ENCODE measurements at regions of chr2 and their contacts with region 1.

Region 1: GRCh38 chr2:2121887-2122286 is 209.2 kb downstream of the MYT1L start:
- DNase-seq: no peak
- ATAC-seq: no peak
- H3K4me3 ChIP-seq: no peak overlapping the region
- H3K27ac ChIP-seq: no peak overlapping the region
- H3K4me1 ChIP-seq: peaks cover 0 to 8% (median 0%) of the 10 kb centered on the region in 9 donors
- H3K27me3 ChIP-seq: peaks cover 0 to 10% (median 0%) of the 10 kb centered on the region in 7 donors
- CTCF ChIP-seq: no peak

Region 2: DNA sequence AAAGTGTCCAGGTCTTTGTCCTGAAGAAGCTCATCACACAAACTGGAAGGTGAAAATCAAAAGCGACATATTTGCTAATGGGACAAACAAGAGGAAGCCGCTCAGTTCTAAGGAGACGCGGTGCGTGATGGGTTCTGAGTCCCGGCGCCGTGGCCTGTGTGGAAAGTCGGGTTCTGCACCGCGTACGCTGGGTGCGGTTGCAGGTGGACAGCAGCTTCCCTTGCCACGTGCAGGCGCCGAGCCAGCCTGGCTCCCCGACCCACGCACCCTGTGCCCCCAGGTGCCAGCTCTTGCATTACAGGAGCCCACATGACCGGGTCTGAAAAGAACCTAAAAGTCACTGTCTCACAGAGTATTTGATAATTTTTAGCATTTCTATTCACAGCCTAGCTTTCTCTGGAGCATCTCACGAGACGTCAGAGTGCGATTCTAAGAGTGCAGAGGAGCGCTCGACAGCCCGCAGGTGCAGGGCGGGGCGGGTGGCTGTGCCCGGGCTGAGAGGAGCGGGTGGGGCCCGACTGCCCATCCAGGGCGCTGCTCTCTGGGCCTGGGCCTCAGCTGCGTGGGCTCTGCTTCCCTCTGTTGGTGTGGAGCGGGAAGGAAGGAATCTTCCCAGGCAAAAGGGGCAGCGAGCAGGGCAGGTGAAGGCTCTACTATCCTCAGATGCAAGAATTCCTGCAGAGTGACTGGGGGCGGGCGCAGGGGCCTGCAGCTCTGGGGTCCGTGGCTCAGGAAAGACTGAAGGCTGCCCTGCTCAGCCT is 169.8 kb after region 1 on chr2:
- intact Hi-C with region 1: loop called in 5 of 10 experiments (anchors 5 kb)
- DNase-seq: peak in 1 of 2 donors; percentile 43
- ATAC-seq: peak; percentile 46 to 91 (median 84)
- H3K4me3 ChIP-seq: no peak overlapping the region
- H3K27ac ChIP-seq: no peak overlapping the region
- H3K4me1 ChIP-seq: peaks cover 0 to 3% (median 0%) of the 10 kb centered on the region in 9 donors
- H3K27me3 ChIP-seq: peaks cover 0 to 52% (median 19%) of the 10 kb centered on the region in 7 donors
- CTCF ChIP-seq: peak; percentile 14 to 72 (median 64)